CD8-positive, alpha-beta T cell (primary cell): ENCODE measurements at regions of chr2 and their contacts with region 1.

Region 1: DNA sequence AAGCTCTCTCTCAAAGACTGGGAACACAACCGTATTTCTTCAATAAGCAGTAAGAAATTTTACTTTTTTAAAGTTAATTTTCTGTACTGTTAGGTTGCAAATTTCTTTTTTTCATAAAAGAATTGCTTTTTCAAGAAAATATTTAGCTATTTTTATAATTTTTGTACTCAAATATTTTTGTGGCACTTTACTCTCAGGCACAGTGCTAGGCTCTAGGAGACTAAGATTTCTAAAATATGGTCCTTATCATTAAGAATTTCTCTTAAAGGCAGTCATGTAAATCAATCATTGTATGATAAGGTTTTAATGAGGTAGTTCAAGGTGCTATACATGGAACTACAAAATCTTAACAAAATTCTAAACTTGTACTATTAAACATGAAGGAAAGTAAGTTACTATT is 61.4 kb downstream of the MTX2 start:
- DNase-seq: no peak
- ATAC-seq: no peak
- H3K4me3 ChIP-seq: no peak overlapping the region
- H3K4me3 Mint-ChIP-seq: no peak overlapping the region
- H3K27ac ChIP-seq: no peak overlapping the region
- H3K27ac Mint-ChIP-seq: no peak overlapping the region
- H3K4me1 ChIP-seq: no peaks in the 10 kb centered on the region
- H3K4me1 Mint-ChIP-seq: no peaks in the 10 kb centered on the region
- H3K27me3 ChIP-seq: no peaks in the 10 kb centered on the region
- H3K27me3 Mint-ChIP-seq: no peaks in the 10 kb centered on the region
- CTCF ChIP-seq: no peak

Region 2: DNA sequence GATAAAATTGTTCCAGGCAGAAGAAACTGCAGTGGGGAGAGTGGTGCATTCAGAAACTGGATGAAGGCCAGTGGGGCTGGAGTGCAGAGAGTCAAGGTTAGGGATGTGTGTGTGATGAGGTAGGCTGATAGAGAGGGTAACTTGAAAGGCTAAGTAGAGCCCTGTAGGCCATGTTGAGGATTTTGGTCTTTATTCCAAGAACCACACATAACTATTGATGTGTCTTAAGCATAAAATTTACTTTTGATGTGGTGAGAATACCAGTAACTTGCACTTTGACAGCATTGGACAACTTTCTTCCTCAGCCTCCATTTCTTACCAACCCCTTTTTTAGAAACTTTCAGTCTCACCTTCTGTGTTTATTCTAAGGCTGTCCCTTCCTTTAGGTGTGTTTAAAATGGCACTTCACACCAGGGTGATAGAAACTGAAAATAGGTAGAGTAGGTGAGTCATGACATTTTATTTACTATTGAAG is 38.8 kb before region 1 on chr2:
- CTCF ChIA-PET with region 1: no interaction called
- POLR2A ChIA-PET with region 1: no interaction called
- intact Hi-C with region 1: loop called in 1 of 2 experiments (anchors 1 kb)
- DNase-seq: no peak
- ATAC-seq: no peak
- H3K4me3 ChIP-seq: no peak overlapping the region
- H3K4me3 Mint-ChIP-seq: no peak overlapping the region
- H3K27ac ChIP-seq: no peak overlapping the region
- H3K27ac Mint-ChIP-seq: no peak overlapping the region
- H3K4me1 ChIP-seq: peaks cover 10% of the 10 kb centered on the region
- H3K4me1 Mint-ChIP-seq: peaks cover 41% of the 10 kb centered on the region
- H3K27me3 ChIP-seq: no peaks in the 10 kb centered on the region
- H3K27me3 Mint-ChIP-seq: no peaks in the 10 kb centered on the region
- CTCF ChIP-seq: no peak

Region 3: GRCh38 chr2:176317199-176317598 is 13.4 kb before region 1 on chr2:
- CTCF ChIA-PET with region 1: no interaction called
- POLR2A ChIA-PET with region 1: no interaction called
- intact Hi-C with region 1: no loop called
- DNase-seq: no peak
- ATAC-seq: no peak
- H3K4me3 ChIP-seq: no peak overlapping the region
- H3K4me3 Mint-ChIP-seq: no peak overlapping the region
- H3K27ac ChIP-seq: no peak overlapping the region
- H3K27ac Mint-ChIP-seq: no peak overlapping the region
- H3K4me1 ChIP-seq: no peaks in the 10 kb centered on the region
- H3K4me1 Mint-ChIP-seq: peaks cover 7% of the 10 kb centered on the region
- H3K27me3 ChIP-seq: no peaks in the 10 kb centered on the region
- H3K27me3 Mint-ChIP-seq: no peaks in the 10 kb centered on the region
- CTCF ChIP-seq: no peak

Region 4: GRCh38 chr2:176356251-176356650 is 25.6 kb after region 1 on chr2:
- CTCF ChIA-PET with region 1: no interaction called
- POLR2A ChIA-PET with region 1: no interaction called
- intact Hi-C with region 1: no loop called
- DNase-seq: no peak
- ATAC-seq: no peak
- H3K4me3 ChIP-seq: no peak overlapping the region
- H3K4me3 Mint-ChIP-seq: no peak overlapping the region
- H3K27ac ChIP-seq: no peak overlapping the region
- H3K27ac Mint-ChIP-seq: no peak overlapping the region
- H3K4me1 ChIP-seq: no peaks in the 10 kb centered on the region
- H3K4me1 Mint-ChIP-seq: peaks cover 5% of the 10 kb centered on the region
- H3K27me3 ChIP-seq: no peaks in the 10 kb centered on the region
- H3K27me3 Mint-ChIP-seq: peaks cover 8% of the 10 kb centered on the region
- CTCF ChIP-seq: no peak

Region 5: DNA sequence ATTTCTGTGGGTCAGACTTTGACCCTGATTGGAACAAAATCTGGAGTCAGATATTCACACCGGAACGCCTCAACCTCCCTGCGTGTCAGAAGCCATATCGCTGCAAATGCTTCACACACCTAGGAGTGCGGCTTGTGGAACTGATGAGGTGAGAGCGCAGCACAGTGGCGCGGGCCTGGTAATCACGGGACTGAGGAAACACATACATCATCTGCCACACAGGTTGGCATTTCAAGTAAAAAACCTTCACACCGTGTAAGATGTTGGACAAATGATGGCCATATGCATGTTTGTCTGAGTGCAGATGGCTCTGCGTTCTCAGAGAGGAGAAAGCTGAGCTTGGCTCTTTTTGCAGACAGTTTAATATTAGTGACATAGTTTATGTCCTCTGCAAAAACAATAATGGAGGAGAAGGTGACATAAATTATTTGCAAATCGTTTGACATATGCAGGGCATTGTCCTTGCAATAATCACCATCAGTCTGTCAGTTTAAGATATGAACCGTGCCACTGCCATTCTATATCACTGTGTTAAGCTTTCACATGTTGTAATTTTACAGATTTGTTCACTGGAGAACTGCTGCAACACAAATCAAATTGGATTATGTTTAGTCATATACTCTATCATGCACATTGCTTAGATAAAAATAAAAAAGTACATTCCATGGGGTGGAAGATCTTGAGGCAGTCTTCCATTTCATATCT is 40.0 kb after region 1 on chr2:
- CTCF ChIA-PET with region 1: no interaction called
- POLR2A ChIA-PET with region 1: no interaction called
- intact Hi-C with region 1: no loop called
- DNase-seq: no peak
- ATAC-seq: no peak
- H3K4me3 ChIP-seq: no peak overlapping the region
- H3K4me3 Mint-ChIP-seq: no peak overlapping the region
- H3K27ac ChIP-seq: no peak overlapping the region
- H3K27ac Mint-ChIP-seq: no peak overlapping the region
- H3K4me1 ChIP-seq: no peaks in the 10 kb centered on the region
- H3K4me1 Mint-ChIP-seq: no peaks in the 10 kb centered on the region
- H3K27me3 ChIP-seq: no peaks in the 10 kb centered on the region
- H3K27me3 Mint-ChIP-seq: peaks cover 12% of the 10 kb centered on the region
- CTCF ChIP-seq: no peak

Region 6: DNA sequence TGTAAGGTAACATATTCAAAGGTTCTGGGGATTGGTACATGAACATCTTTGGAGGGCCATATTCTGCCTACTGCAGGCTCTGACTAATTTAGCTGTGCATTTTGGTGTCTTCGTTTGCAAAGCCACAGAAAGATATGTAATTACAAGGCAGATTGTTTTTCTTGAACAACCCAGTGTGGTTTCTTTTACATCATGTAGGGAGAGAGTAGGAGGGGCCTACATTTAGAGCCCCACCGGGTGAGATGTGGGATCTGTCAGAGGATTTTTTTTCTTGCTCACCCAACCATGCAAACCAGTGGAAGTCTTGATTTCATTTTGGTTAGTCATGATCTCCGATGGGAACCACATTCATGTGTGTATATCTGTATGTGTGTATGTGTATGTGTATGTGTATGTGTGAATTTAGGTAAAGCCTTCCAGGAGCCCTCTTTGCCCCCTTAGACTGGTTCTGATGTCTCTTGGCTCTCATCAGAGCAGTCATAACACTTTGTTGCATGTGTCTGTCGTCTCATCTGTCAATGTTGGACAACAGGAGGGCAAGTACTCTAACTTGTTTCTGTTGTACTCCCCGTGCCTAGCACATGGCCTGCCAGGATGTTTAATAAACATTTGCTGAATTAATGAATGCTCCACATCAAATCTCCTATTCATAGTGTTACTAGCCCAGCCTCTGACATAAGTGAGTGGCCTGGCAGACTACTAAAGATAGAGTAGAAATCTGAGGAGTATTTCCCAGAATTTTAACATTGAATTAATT is 178.6 kb after region 1 on chr2:
- CTCF ChIA-PET with region 1: no interaction called
- POLR2A ChIA-PET with region 1: no interaction called
- intact Hi-C with region 1: no loop called
- DNase-seq: peak in 1 of 9 experiments; percentile 2
- ATAC-seq: no peak
- H3K4me3 ChIP-seq: no peak overlapping the region
- H3K4me3 Mint-ChIP-seq: no peak overlapping the region
- H3K27ac ChIP-seq: no peak overlapping the region
- H3K27ac Mint-ChIP-seq: no peak overlapping the region
- H3K4me1 ChIP-seq: no peaks in the 10 kb centered on the region
- H3K4me1 Mint-ChIP-seq: no peaks in the 10 kb centered on the region
- H3K27me3 ChIP-seq: no peaks in the 10 kb centered on the region
- H3K27me3 Mint-ChIP-seq: no peaks in the 10 kb centered on the region
- CTCF ChIP-seq: no peak